IMR-90 (cell line): ENCODE measurements at regions of chr7 and their contacts with region 1.

Region 1: DNA sequence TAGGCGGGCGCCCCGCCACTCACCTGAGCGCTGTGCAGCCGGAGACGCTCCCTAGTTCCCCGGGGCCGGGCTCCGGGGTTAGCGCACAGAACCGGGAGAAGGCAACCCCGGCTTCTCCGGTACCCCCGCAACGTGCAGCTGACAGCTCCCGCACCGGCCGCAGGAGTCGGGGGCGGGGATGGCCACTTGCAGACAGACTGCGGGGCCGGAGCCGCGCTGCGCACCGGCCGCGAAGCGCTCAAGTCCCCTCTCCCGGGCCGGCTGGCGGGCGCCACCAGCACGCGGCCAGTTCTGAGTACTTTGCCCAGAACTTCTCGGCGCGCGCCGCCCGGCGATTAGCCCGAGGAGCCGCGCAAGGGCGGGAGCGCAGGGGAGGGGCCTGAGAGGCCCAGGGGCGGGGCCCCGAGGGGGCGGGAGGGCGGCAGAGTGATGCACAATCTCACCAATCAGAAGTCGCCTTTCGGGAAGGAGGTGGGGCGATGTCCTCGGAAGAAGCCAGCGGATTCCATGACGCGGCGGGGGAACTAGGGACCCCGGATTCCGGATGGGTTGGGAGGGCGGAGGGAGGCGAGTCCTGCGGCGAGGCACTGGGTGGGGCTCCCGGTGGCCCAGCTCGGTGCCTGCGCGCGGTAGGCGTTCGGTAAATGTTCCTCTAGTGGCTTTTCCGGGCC is at the start of gene OSBPL3:
- DNase-seq: peak; percentile 95
- ATAC-seq: peak; percentile 91
- H3K4me3 ChIP-seq: peak within 1 kb of the TSS; percentile 77
- H3K27ac ChIP-seq: peak within 1 kb of the TSS; percentile 84
- H3K4me1 ChIP-seq: peaks cover 8% of the 10 kb centered on the region
- H3K27me3 ChIP-seq: no peaks in the 10 kb centered on the region
- CTCF ChIP-seq: peak; percentile 33; the same call in 1 of the 2 replicates
- POLR2A ChIP-seq: peak; percentile 79
- RAD21 ChIP-seq: peak; percentile 41
- total RNA-seq, gene OSBPL3: 29.9 and 30.0 TPM in 2 replicates

Region 2: DNA sequence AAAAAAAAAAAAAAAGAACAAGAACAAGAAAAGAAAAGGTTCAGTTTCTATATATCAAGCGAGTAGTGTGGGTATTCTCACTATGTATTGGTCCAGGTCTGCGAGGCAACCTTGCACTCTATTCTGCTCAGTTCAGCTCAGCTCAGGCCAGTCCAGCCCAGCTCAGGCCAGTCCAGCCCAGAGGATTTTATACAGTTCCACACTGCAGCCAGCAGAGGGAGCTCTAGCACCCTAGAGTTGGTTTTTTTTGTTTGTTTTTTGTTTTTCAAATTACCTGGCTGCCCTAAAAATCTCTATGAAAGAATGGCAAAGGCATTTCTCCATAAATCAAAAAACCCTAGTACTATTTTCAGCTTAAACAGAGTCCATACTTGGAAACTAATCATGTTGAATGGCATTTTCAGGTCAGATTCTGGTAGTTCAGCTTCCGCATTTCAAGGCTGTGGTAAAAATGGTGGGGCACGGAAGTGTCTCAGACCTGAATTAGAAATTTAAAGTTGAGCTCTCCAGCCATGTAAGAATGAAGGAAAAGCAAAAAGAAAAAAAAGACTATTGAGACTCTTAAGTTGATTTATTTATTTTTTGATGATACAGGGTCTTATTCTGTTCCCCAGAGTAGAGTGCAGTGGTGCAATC is 167.6 kb before region 1 on chr7:
- CTCF ChIA-PET with region 1: interaction called, 12 read pairs
- POLR2A ChIA-PET with region 1: no interaction called
- dilution Hi-C with region 1: no loop called
- in situ Hi-C with region 1: no loop called
- intact Hi-C with region 1: loop called (anchors 2 kb)
- DNase-seq: peak; percentile 36
- ATAC-seq: peak; percentile 95
- H3K4me3 ChIP-seq: no peak overlapping the region
- H3K27ac ChIP-seq: no peak overlapping the region
- H3K4me1 ChIP-seq: no peaks in the 10 kb centered on the region
- H3K27me3 ChIP-seq: no peaks in the 10 kb centered on the region
- CTCF ChIP-seq: peak; percentile 85
- POLR2A ChIP-seq: no peak
- RAD21 ChIP-seq: peak; percentile 77

Region 3: DNA sequence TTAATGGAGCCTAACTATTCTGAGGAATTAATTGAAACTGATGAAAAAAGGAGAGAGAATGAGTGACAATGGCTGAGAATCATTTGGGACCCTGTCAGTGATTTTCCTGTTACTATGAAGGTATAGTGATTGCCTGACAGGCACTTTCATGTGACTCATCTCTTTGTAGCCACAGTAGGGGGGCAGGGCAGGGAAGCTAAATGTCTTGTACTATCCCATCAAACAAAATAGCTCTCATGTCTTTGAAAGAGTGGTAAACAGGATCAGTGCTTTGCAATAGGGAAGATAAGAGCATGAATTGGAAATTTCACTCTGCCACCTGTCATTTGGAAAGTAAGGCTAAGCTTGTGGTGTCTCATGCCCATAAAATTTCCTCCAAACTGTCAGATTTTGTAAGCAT is 128.2 kb before region 1 on chr7:
- CTCF ChIA-PET with region 1: interaction called, 11 read pairs
- POLR2A ChIA-PET with region 1: interaction called, 8 read pairs
- dilution Hi-C with region 1: no loop called
- in situ Hi-C with region 1: no loop called
- intact Hi-C with region 1: no loop called
- DNase-seq: peak; percentile 79
- ATAC-seq: peak; percentile 57
- H3K4me3 ChIP-seq: no peak overlapping the region
- H3K27ac ChIP-seq: no peak overlapping the region
- H3K4me1 ChIP-seq: peaks cover 11% of the 10 kb centered on the region
- H3K27me3 ChIP-seq: no peaks in the 10 kb centered on the region
- CTCF ChIP-seq: no peak
- POLR2A ChIP-seq: no peak
- RAD21 ChIP-seq: no peak

Region 4: DNA sequence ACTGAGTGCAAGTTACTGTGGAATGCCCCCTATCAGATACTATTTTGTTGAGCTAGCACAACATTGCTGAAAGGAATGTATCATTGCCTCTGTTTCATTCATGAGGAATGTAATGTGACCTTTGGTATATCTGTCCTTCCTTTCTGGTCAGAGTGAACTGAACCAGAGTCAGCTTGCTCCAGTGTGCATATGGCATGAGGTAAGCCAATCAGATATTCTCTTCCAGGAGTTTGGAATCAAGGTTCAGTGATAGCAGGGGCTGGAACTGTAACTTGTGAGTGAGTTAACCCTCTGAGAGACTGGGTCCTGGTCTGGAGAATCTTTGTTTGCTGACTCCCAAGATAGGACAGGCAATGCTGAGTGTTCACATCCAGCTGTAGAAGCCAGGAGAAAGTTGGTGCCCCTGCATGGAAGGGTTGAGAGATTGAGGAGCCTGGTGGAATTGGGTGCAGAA is 45.2 kb after region 1 on chr7:
- CTCF ChIA-PET with region 1: interaction called, 6 read pairs
- POLR2A ChIA-PET with region 1: no interaction called
- dilution Hi-C with region 1: no loop called
- in situ Hi-C with region 1: no loop called
- intact Hi-C with region 1: loop called (anchors 2 kb)
- DNase-seq: peak; percentile 94
- ATAC-seq: peak; percentile 94
- H3K4me3 ChIP-seq: no peak overlapping the region
- H3K27ac ChIP-seq: peak overlapping the region; percentile 95
- H3K4me1 ChIP-seq: peaks cover 19% of the 10 kb centered on the region
- H3K27me3 ChIP-seq: no peaks in the 10 kb centered on the region
- CTCF ChIP-seq: 0 out of 2 replicates have a peak, but pooled peaks have one; percentile 8
- POLR2A ChIP-seq: no peak
- RAD21 ChIP-seq: no peak